ENCODE measurements at regions of chr6 and their contacts with region 1.

Region 1: GRCh38 chr6:90296346-90297114 is at the start of gene BACH2:
- DNase-seq: peak; percentile 75 to 96
- H3K4me3 ChIP-seq: peak within 1 kb of the TSS; percentile 87 to 94
- H3K27ac ChIP-seq: peak within 1 kb of the TSS; percentile 91 to 95
- H3K4me1 ChIP-seq: peaks cover 2 to 10% of the 10 kb centered on the region in 2 donors
- H3K27me3 ChIP-seq: no peaks in the 10 kb centered on the region
- CTCF ChIP-seq: peak in 1 of 3 experiments; percentile 18
- total RNA-seq, gene BACH2: 7.7 TPM

Region 2: DNA sequence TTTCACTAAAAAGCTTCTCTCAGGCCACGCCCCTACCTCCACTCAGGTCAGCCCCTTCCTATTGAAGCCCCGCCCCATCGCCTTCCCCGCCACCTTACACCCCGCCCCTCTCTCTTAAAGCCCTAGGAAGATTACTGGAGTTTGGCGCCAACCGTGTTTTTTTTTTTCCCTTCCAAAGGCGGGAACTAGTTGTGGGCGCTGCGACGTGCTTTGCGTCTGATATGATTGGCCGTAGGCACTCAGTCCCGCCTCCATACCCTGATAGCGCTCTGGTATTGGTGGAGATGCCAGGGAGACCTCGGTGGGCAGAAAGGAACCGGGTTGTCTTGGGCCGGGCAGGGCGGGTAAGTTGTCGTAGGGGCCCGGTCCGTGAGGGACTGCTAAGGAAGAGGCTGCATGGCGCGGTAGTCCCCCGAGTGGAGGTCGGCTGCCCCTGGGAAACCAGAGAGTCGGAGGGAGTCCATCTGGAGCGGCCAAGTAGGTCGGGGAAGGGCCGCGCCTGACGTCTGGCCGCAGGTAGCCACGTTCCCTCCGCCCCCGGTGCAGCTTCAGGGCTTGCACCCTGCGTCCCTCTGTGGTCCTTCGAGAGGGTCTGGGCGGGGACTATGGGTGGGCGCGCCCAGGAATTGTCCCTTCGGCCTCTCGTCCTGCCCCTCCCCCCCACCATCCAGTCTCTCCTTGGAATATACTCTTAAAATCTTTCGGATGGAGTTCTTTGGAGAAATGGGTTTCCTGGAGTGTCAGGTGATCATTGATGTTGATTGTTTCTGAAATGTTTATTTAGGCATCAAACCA is 466.7 kb before region 1 on chr6 and contains the start of gene CASP8AP2:
- intact Hi-C with region 1: loop called (anchors 2 kb)
- DNase-seq: peak; percentile 90 to 98
- H3K4me3 ChIP-seq: peak within 1 kb of the TSS; percentile 71 to 73
- H3K27ac ChIP-seq: peak within 1 kb of the TSS; percentile 85 to 89
- H3K4me1 ChIP-seq: peaks cover 0 to 11% of the 10 kb centered on the region in 2 donors
- H3K27me3 ChIP-seq: no peaks in the 10 kb centered on the region
- CTCF ChIP-seq: no peak
- total RNA-seq, gene CASP8AP2: 6.7 TPM

Region 3: GRCh38 chr6:89970609-89971337 is 325.8 kb before region 1 on chr6:
- intact Hi-C with region 1: loop called (anchors 2 kb)
- DNase-seq: peak in 1 of 2 donors; percentile 64
- H3K4me3 ChIP-seq: no peak overlapping the region
- H3K27ac ChIP-seq: no peak overlapping the region
- H3K4me1 ChIP-seq: no peaks in the 10 kb centered on the region
- H3K27me3 ChIP-seq: no peaks in the 10 kb centered on the region
- CTCF ChIP-seq: peak; percentile 50 to 73 (median 53)

Region 4: DNA sequence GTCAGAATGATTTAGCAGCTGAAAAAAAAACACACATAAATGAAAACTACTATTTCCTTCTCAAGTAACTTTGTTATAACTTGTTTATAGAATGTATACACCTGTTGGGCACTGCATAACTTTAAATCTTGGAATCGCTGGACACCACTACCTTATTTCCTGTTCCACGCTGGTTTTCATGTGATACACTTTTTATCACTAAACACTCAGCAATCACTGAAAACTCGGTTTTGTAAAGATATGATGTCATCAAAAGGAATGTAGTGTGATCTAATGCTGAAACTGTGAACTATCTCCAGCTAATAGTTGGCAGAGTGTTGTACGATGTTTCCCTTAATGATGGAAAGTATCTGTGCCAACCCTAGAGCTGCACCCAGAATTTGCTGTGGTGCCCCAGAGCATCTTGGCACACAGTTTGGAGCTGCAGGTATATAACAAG is 127.8 kb before region 1 on chr6:
- intact Hi-C with region 1: loop called (anchors 5 kb)
- DNase-seq: no peak
- H3K4me3 ChIP-seq: no peak overlapping the region
- H3K27ac ChIP-seq: no peak overlapping the region
- H3K4me1 ChIP-seq: peaks cover 0 to 35% of the 10 kb centered on the region in 2 donors
- H3K27me3 ChIP-seq: no peaks in the 10 kb centered on the region
- CTCF ChIP-seq: no peak

Region 5: DNA sequence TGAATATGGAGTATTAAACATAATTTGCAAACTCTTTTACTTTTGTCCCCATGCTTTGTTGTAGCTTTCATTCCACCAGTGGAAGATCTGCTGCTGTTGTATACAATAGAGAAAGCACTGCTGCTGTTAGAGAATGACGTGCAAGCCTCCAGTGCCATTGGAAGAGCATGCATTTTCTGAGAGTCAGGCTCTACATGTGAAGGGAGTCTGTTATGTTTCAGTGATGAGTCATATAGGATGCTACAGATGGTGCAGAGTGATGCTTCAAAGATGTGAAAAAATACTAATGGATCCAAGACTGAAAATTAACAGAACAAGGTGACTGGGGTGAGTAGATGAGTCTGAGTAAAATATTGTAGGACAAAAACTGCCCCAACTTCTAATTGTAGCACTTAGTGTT is 22.5 kb after region 1 on chr6:
- intact Hi-C with region 1: no loop called
- DNase-seq: no peak
- H3K4me3 ChIP-seq: no peak overlapping the region
- H3K27ac ChIP-seq: no peak overlapping the region
- H3K4me1 ChIP-seq: no peaks in the 10 kb centered on the region
- H3K27me3 ChIP-seq: no peaks in the 10 kb centered on the region
- CTCF ChIP-seq: no peak

Region 6: GRCh38 chr6:90369024-90369519 is 72.5 kb after region 1 on chr6:
- intact Hi-C with region 1: loop called (anchors 2 kb)
- DNase-seq: peak; percentile 22 to 91
- H3K4me3 ChIP-seq: no peak overlapping the region
- H3K27ac ChIP-seq: peak overlapping the region; percentile 63 to 65
- H3K4me1 ChIP-seq: peaks cover 5 to 8% of the 10 kb centered on the region in 2 donors
- H3K27me3 ChIP-seq: no peaks in the 10 kb centered on the region
- CTCF ChIP-seq: no peak

Region 7: GRCh38 chr6:90478789-90479602 is 182.5 kb after region 1 on chr6:
- intact Hi-C with region 1: loop called (anchors 2 kb)
- DNase-seq: peak; percentile 75 to 94
- H3K4me3 ChIP-seq: no peak overlapping the region
- H3K27ac ChIP-seq: no peak overlapping the region
- H3K4me1 ChIP-seq: no peaks in the 10 kb centered on the region
- H3K27me3 ChIP-seq: no peaks in the 10 kb centered on the region
- CTCF ChIP-seq: peak; percentile 83 to 89 (median 83)